GM10248 (cell line): ENCODE measurements at regions of chr16 and their contacts with region 1.

Region 1: DNA sequence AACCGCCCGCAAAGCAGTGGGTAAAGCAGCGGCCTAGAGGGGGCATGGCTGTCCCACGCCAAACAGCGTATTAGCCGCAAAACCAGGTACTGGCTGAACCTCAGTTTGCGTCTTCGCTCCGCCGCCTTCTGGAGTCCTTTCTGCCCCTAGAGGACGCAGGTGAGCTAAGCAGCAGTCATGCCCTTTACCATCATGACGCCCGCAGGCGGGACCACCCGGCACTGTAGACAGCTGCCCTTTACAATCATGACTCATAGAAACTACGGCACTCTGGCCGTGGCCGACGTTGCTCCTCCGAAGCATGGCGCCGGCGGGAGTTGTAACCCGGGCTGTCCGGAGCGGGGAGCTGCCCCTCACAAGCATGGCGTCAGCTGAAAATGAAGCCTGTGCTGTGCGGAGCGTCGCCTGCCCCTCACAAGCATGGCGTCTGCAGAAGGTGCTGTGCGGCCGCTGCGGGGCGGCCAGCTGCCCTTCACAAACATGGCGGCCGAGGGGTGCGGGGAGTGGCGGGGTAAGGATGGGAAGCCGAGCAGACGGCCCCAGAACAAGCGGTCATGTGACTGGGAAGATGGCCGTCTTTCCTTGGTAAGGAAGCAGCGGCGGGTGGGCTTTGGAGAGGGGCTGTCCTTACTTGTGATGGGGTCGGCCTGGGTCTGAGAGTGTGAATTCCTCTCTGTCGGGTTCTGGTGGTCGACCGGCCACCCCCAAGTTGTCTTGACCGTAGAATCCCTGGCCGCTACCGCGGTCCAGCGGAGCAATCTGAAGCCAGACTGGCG is at the start of gene VPS35L:
- DNase-seq: peak; percentile 93
- CTCF ChIP-seq: peak; percentile 63

Region 2: DNA sequence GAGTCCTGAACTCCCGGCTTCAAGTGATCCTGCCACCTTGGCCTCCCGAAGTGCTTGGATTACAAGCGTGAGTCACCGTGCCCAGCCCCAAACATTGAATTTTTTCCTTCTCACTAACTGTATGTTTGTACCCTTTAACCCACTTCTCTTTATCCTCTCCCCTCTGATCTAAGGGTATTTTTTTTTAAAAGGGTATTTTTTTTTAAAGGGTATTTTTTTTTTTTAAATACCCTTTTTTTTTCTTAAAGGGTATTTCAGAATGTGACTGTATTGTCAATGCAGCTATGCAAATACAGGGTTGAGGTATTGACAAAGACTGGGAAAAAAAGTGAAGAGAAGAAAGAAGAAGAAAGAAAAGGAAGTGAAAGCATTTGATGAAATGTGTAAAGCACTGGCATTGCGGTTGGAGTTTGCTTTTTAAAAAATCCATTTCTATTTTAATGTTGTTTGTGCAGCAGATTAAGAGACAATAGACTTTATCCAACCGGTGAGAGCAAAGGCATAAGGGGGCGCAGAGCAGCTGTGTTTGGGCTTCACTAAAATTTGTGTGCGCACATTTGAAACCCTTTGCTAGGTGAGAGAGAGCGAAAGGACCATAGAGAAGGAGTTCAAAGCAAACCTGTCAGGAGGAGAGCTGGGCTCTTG is 344.9 kb before region 1 on chr16:
- CTCF ChIA-PET with region 1: no interaction called
- POLR2A ChIA-PET with region 1: no interaction called
- DNase-seq: peak; percentile 56
- CTCF ChIP-seq: peak; percentile 37

Region 3: GRCh38 chr16:19523648-19524355 is 31.5 kb before region 1 on chr16 and contains the start of gene CCP110:
- CTCF ChIA-PET with region 1: interaction called, 12 read pairs
- POLR2A ChIA-PET with region 1: no interaction called
- DNase-seq: peak; percentile 93
- CTCF ChIP-seq: no peak

Region 4: DNA sequence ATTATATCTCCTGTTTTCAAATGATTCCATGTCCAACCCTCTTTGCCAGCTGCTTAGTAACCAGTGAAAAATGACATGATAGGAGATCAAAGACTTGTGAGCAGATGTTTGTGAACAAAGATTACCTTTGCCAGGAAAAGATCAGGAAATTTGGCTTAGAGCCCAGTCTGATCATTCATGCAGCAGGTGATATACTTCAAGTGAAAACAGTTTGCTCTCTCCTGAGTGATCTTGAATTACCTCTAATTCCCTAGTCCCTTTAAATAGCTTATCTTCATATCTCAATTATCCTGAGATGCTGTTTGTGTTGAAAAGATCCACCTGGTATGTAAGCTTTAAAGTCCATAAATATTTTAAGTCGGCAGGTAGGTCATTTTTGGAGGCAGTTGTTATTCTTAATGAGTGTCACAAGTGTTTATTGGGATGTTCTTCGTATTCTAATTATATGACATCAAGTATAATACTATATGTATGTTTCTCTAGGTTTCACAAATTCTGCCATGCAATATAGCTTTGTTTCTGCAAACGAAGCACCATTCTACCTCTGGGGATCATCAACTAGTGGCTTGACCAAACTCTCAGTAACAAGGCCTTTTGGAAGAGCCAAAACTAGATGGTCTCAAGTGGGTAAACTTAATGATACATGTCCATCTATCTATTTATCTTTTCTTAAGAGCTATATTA is 13.1 kb before region 1 on chr16:
- CTCF ChIA-PET with region 1: interaction called, 48 read pairs
- POLR2A ChIA-PET with region 1: no interaction called
- DNase-seq: no peak
- CTCF ChIP-seq: no peak